ENCODE measurements at regions of chr12 and their contacts with region 1.

Region 1: GRCh38 chr12:92890601-92891106 is 38.4 kb downstream of the EEA1 start:
- DNase-seq: no peak
- ATAC-seq: no peak
- H3K4me3 ChIP-seq: no peak overlapping the region
- H3K27ac ChIP-seq: no peak overlapping the region
- H3K4me1 ChIP-seq: no peaks in the 10 kb centered on the region
- H3K27me3 ChIP-seq: no peaks in the 10 kb centered on the region
- CTCF ChIP-seq: no peak
- EP300 ChIP-seq: no peak
- POLR2A ChIP-seq: no peak
- RAD21 ChIP-seq: no peak

Region 2: GRCh38 chr12:91984556-91984955 is 906.1 kb before region 1 on chr12:
- CTCF ChIA-PET with region 1: no interaction called
- POLR2A ChIA-PET with region 1: no interaction called
- in situ Hi-C with region 1: no loop called
- intact Hi-C with region 1: loop called (anchors 5 kb)
- DNase-seq: no peak
- ATAC-seq: no peak
- H3K4me3 ChIP-seq: no peak overlapping the region
- H3K27ac ChIP-seq: no peak overlapping the region
- H3K4me1 ChIP-seq: no peaks in the 10 kb centered on the region
- H3K27me3 ChIP-seq: no peaks in the 10 kb centered on the region; a peak in 1 of 5 replicates
- CTCF ChIP-seq: no peak
- EP300 ChIP-seq: no peak
- POLR2A ChIP-seq: no peak
- RAD21 ChIP-seq: no peak

Region 3: GRCh38 chr12:93008044-93008778 is 117.6 kb after region 1 on chr12:
- CTCF ChIA-PET with region 1: no interaction called
- POLR2A ChIA-PET with region 1: no interaction called
- in situ Hi-C with region 1: no loop called
- intact Hi-C with region 1: no loop called
- DNase-seq: peak; percentile 62
- ATAC-seq: no peak
- H3K4me3 ChIP-seq: peak overlapping the region; percentile 25 to 68 (median 50); a peak in 5 of 6 replicates
- H3K27ac ChIP-seq: peak overlapping the region; percentile 89
- H3K4me1 ChIP-seq: peaks cover 79% of the 10 kb centered on the region
- H3K27me3 ChIP-seq: no peaks in the 10 kb centered on the region
- CTCF ChIP-seq: no peak
- EP300 ChIP-seq: no peak; a peak in 1 of 4 replicates
- POLR2A ChIP-seq: no peak
- RAD21 ChIP-seq: no peak